Caco-2 (cell line): ENCODE measurements at regions of chr6 and their contacts with region 1.

Region 1: GRCh38 chr6:88982720-88983119 is 19.3 kb upstream of the RNGTT start:
- DNase-seq: peak in 1 of 2 experiments; percentile 43
- H3K4me3 ChIP-seq: no peak overlapping the region
- H3K4me3 Mint-ChIP-seq: no peak overlapping the region
- H3K27ac Mint-ChIP-seq: no peak overlapping the region
- H3K4me1 ChIP-seq: no peaks in the 10 kb centered on the region
- H3K4me1 Mint-ChIP-seq: no peaks in the 10 kb centered on the region
- H3K27me3 ChIP-seq: no peaks in the 10 kb centered on the region
- H3K27me3 Mint-ChIP-seq: peaks cover 3% of the 10 kb centered on the region
- CTCF ChIP-seq: peak; percentile 60

Region 2: GRCh38 chr6:89035252-89036106 is 52.8 kb after region 1 on chr6:
- CTCF ChIA-PET with region 1: no interaction called
- POLR2A ChIA-PET with region 1: no interaction called
- intact Hi-C with region 1: loop called (anchors 2 kb)
- DNase-seq: peak; percentile 81 to 87
- H3K4me3 ChIP-seq: 0 out of 2 replicates have a peak overlapping the region, but pooled peaks have one; percentile 6
- H3K4me3 Mint-ChIP-seq: peak overlapping the region; percentile 65
- H3K27ac Mint-ChIP-seq: peak overlapping the region; percentile 87
- H3K4me1 ChIP-seq: peaks cover 25% of the 10 kb centered on the region
- H3K4me1 Mint-ChIP-seq: peaks cover 18% of the 10 kb centered on the region
- H3K27me3 ChIP-seq: no peaks in the 10 kb centered on the region
- H3K27me3 Mint-ChIP-seq: no peaks in the 10 kb centered on the region
- CTCF ChIP-seq: no peak

Region 3: DNA sequence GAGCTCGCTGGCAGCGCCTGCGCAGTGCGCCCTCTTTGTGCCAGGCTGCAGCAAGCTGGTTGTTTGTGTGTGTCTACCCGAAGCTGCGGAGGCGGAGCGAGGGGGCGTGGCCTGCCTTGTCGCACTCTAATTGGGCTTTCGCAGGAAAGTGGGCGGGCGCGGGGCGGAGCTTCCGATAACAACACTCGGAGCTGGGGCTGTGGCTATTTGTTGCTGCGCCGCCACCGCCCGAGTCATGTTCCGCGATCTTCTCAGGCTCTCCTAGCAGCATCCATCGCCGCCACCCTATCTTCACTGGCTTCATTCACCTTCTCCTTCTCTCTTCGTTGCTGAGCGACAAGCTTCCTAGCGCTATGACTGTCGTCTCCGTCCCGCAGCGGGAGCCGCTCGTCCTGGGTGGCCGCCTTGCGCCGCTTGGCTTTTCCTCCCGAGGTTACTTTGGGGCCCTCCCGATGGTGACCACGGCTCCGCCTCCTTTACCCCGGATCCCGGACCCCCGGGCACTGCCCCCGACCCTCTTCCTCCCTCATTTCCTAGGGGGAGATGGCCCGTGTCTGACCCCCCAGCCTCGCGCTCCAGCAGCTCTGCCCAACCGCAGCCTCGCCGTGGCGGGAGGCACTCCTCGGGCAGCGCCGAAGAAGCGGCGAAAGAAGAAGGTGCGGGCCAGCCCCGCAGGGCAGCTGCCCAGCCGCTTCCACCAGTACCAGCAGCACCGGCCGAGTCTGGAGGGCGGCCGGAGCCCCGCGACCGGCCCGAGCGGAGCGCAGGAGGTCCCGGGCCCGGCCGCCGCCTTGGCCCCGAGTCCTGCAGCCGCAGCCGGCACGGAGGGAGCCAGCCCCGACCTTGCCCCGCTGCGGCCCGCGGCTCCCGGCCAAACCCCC is 98.1 kb after region 1 on chr6 and contains the start of gene PNRC1:
- CTCF ChIA-PET with region 1: interaction called, 29 read pairs
- POLR2A ChIA-PET with region 1: interaction called, 11 read pairs
- intact Hi-C with region 1: loop called (anchors 1 kb)
- DNase-seq: peak; percentile 98 to 99
- H3K4me3 ChIP-seq: peak within 1 kb of the TSS; percentile 100
- H3K4me3 Mint-ChIP-seq: peak within 1 kb of the TSS; percentile 93
- H3K27ac Mint-ChIP-seq: peak within 1 kb of the TSS; percentile 91
- H3K4me1 ChIP-seq: 0 out of 2 replicates have a peak, but pooled peaks cover 4% of the 10 kb centered on the region
- H3K4me1 Mint-ChIP-seq: peaks cover 4% of the 10 kb centered on the region
- H3K27me3 ChIP-seq: no peaks in the 10 kb centered on the region
- H3K27me3 Mint-ChIP-seq: no peaks in the 10 kb centered on the region
- CTCF ChIP-seq: peak in 1 of 2 experiments; percentile 21
- total RNA-seq, gene PNRC1: 42.1 and 45.1 TPM in 2 replicates

Region 4: GRCh38 chr6:89117211-89118108 is 134.7 kb after region 1 on chr6 and contains the start of gene SRSF12:
- CTCF ChIA-PET with region 1: interaction called, 8 read pairs
- POLR2A ChIA-PET with region 1: no interaction called
- intact Hi-C with region 1: loop called (anchors 1 kb)
- DNase-seq: peak in 1 of 2 experiments; percentile 48
- H3K4me3 ChIP-seq: peak within 1 kb of the TSS; percentile 35
- H3K4me3 Mint-ChIP-seq: peak within 1 kb of the TSS; percentile 80
- H3K27ac Mint-ChIP-seq: no peak within 1 kb of the TSS
- H3K4me1 ChIP-seq: no peaks in the 10 kb centered on the region
- H3K4me1 Mint-ChIP-seq: no peaks in the 10 kb centered on the region
- H3K27me3 ChIP-seq: no peaks in the 10 kb centered on the region
- H3K27me3 Mint-ChIP-seq: no peaks in the 10 kb centered on the region
- CTCF ChIP-seq: no peak
- total RNA-seq, gene SRSF12: 0.49 and 0.79 TPM in 2 replicates

Region 5: GRCh38 chr6:89122625-89123024 is 139.9 kb after region 1 on chr6:
- CTCF ChIA-PET with region 1: interaction called, 8 read pairs
- POLR2A ChIA-PET with region 1: no interaction called
- intact Hi-C with region 1: loop called (anchors 1 kb)
- DNase-seq: peak in 1 of 2 experiments; percentile 45
- H3K4me3 ChIP-seq: no peak overlapping the region
- H3K4me3 Mint-ChIP-seq: no peak overlapping the region
- H3K27ac Mint-ChIP-seq: no peak overlapping the region
- H3K4me1 ChIP-seq: no peaks in the 10 kb centered on the region
- H3K4me1 Mint-ChIP-seq: no peaks in the 10 kb centered on the region
- H3K27me3 ChIP-seq: no peaks in the 10 kb centered on the region
- H3K27me3 Mint-ChIP-seq: no peaks in the 10 kb centered on the region
- CTCF ChIP-seq: peak; percentile 61 to 71

Region 6: DNA sequence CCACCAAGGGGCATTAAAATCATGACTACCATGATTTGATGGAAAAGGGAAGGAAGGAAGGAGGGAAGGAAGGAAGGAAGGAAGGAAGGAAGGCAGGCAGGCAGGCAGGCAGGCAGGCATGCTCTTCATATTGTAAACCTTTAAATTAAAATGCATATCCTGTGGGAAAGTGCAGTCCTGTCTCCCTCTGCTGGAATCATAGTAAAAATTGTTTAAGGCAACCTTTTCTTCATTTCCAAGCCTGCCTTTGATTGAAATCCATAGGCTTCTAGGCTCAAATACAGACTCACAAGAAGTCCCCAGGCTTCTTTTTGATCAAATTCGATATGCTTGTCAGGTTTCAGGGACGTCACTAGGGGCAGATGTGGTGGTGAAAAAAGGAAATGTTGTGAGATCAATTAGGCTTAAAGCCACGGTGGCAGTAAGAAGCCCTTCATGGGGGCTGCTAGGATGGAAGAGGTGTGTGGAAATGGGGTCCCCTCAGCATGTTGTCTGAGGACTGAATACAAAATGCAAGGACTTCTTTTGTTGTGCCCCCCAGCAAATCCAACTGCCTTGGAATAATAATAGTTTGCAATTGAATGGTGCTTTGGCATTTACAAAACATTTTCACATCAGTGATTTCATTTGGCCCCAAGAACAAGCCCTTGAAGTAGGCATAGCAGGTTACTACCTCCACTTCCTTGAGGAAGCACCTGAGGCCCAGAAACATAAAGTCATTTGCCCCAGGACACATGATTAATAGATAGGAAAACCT is 260.0 kb after region 1 on chr6:
- CTCF ChIA-PET with region 1: interaction called, 20 read pairs
- POLR2A ChIA-PET with region 1: no interaction called
- intact Hi-C with region 1: loop called (anchors 1 kb)
- DNase-seq: peak in 1 of 2 experiments; percentile 35
- H3K4me3 ChIP-seq: no peak overlapping the region
- H3K4me3 Mint-ChIP-seq: no peak overlapping the region
- H3K27ac Mint-ChIP-seq: no peak overlapping the region
- H3K4me1 ChIP-seq: no peaks in the 10 kb centered on the region
- H3K4me1 Mint-ChIP-seq: no peaks in the 10 kb centered on the region
- H3K27me3 ChIP-seq: no peaks in the 10 kb centered on the region
- H3K27me3 Mint-ChIP-seq: peaks cover 6% of the 10 kb centered on the region
- CTCF ChIP-seq: peak; percentile 46 to 64